ENCODE measurements at regions of chr12 and their contacts with region 1.

Region 1: GRCh38 chr12:4107436-4107878 is 166.1 kb upstream of the CCND2 start:
- DNase-seq: peak; percentile 80
- H3K4me3 Mint-ChIP-seq: peak overlapping the region; percentile 17
- H3K27ac Mint-ChIP-seq: peak overlapping the region; percentile 75
- H3K4me1 Mint-ChIP-seq: peaks cover 40% of the 10 kb centered on the region
- H3K27me3 Mint-ChIP-seq: peaks cover 8% of the 10 kb centered on the region

Region 2: GRCh38 chr12:3998968-3999826 is 108.3 kb before region 1 on chr12:
- CTCF ChIA-PET with region 1: interaction called, 6 read pairs
- POLR2A ChIA-PET with region 1: no interaction called
- intact Hi-C with region 1: loop called (anchors 2 kb)
- DNase-seq: no peak
- H3K4me3 Mint-ChIP-seq: no peak overlapping the region
- H3K27ac Mint-ChIP-seq: no peak overlapping the region
- H3K4me1 Mint-ChIP-seq: peaks cover 3% of the 10 kb centered on the region
- H3K27me3 Mint-ChIP-seq: no peaks in the 10 kb centered on the region

Region 3: GRCh38 chr12:4064008-4064407 is 43.4 kb before region 1 on chr12:
- CTCF ChIA-PET with region 1: no interaction called
- POLR2A ChIA-PET with region 1: no interaction called
- intact Hi-C with region 1: loop called (anchors 1 kb)
- DNase-seq: no peak
- H3K4me3 Mint-ChIP-seq: no peak overlapping the region
- H3K27ac Mint-ChIP-seq: peak overlapping the region; percentile 56
- H3K4me1 Mint-ChIP-seq: peaks cover 33% of the 10 kb centered on the region
- H3K27me3 Mint-ChIP-seq: no peaks in the 10 kb centered on the region

Region 4: GRCh38 chr12:4135919-4136605 is 28.6 kb after region 1 on chr12:
- CTCF ChIA-PET with region 1: interaction called, 34 read pairs
- POLR2A ChIA-PET with region 1: interaction called, 5 read pairs
- intact Hi-C with region 1: loop called (anchors 1 kb)
- DNase-seq: peak; percentile 91
- H3K4me3 Mint-ChIP-seq: peak overlapping the region; percentile 13
- H3K27ac Mint-ChIP-seq: peak overlapping the region; percentile 89
- H3K4me1 Mint-ChIP-seq: peaks cover 52% of the 10 kb centered on the region
- H3K27me3 Mint-ChIP-seq: no peaks in the 10 kb centered on the region

Region 5: GRCh38 chr12:4320853-4321701 is 213.6 kb after region 1 on chr12 and contains the start of gene TIGAR:
- CTCF ChIA-PET with region 1: no interaction called
- POLR2A ChIA-PET with region 1: no interaction called
- intact Hi-C with region 1: loop called (anchors 1 kb)
- DNase-seq: peak; percentile 94
- H3K4me3 Mint-ChIP-seq: peak within 1 kb of the TSS; percentile 94
- H3K27ac Mint-ChIP-seq: peak within 1 kb of the TSS; percentile 87
- H3K4me1 Mint-ChIP-seq: peaks cover 34% of the 10 kb centered on the region
- H3K27me3 Mint-ChIP-seq: no peaks in the 10 kb centered on the region
- total RNA-seq, gene TIGAR: 12.0 to 13.6 TPM

Measured in activated CD4-positive, alpha-beta memory T cell treated with anti-CD3 and anti-CD28 coated beads for 36 hours (primary cell).